ENCODE measurements at regions of chr11 and their contacts with region 1.

Region 1: GRCh38 chr11:35617687-35618496 is at the start of gene FJX1:
- DNase-seq: peak; percentile 96
- H3K4me3 ChIP-seq: peak within 1 kb of the TSS; percentile 71
- H3K27ac ChIP-seq: peak within 1 kb of the TSS; percentile 73 to 94
- H3K4me1 ChIP-seq: peaks cover 26 to 51% of the 10 kb centered on the region in 2 experiments
- H3K27me3 ChIP-seq: no peaks in the 10 kb centered on the region
- CTCF ChIP-seq: no peak
- EP300 ChIP-seq: no peak
- RAD21 ChIP-seq: peak; percentile 1; the same call in 1 of the 2 replicates
- polyA plus RNA-seq, gene FJX1: 29.8 and 34.5 TPM in 2 replicates

Region 2: GRCh38 chr11:35605711-35606110 is 12.2 kb before region 1 on chr11:
- CTCF ChIA-PET with region 1: interaction called, 19 read pairs
- POLR2A ChIA-PET with region 1: no interaction called
- DNase-seq: no peak
- H3K4me3 ChIP-seq: no peak overlapping the region
- H3K27ac ChIP-seq: no peak overlapping the region
- H3K4me1 ChIP-seq: peaks cover 3 to 5% of the 10 kb centered on the region in 2 experiments; a peak in 2 of 4 replicates
- H3K27me3 ChIP-seq: no peaks in the 10 kb centered on the region
- CTCF ChIP-seq: no peak
- EP300 ChIP-seq: no peak
- RAD21 ChIP-seq: no peak

Region 3: GRCh38 chr11:36131721-36132397 is 514.0 kb after region 1 on chr11:
- CTCF ChIA-PET with region 1: interaction called, 11 read pairs
- POLR2A ChIA-PET with region 1: no interaction called
- DNase-seq: peak; percentile 65
- H3K4me3 ChIP-seq: no peak overlapping the region; a peak in 1 of 4 replicates
- H3K27ac ChIP-seq: no peak overlapping the region
- H3K4me1 ChIP-seq: peaks cover 0 to 5% of the 10 kb centered on the region in 2 experiments; a peak in 3 of 4 replicates
- H3K27me3 ChIP-seq: no peaks in the 10 kb centered on the region
- CTCF ChIP-seq: peak; percentile 50
- EP300 ChIP-seq: no peak
- RAD21 ChIP-seq: peak; percentile 74

Measured in SK-N-SH (cell line).